ENCODE measurements at regions of chr10 and their contacts with region 1.

Region 1: DNA sequence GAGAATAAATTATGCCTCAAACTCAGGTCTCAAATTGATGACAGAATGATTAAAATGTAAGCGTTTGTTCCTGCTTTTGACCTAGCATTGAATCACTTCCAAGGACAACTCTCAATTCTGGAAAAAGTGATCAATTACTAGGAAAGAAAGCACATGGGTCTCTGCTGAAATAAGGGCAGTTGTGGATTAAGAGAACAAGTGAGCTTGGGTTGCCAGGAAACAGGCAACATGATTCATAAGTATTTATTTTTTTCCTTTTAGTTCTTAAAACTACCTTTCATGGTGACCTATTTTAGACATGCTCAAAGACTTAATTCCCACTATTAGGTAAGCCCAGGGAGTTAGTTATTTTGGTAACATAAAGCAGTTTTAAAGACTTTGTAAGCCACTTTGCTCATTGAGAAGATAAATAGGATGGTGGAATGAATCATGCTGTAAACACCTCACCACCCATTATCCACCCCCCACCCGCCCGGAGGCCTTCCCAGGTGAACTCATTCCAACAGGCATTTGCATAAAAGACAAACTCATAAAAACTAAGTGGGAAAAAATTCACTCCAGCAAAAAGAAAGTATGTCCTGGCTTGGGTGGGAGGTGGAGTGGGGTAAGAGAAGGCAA is 728.3 kb downstream of the SORCS1 start:
- DNase-seq: peak; percentile 74
- H3K4me3 Mint-ChIP-seq: no peak overlapping the region
- H3K27ac Mint-ChIP-seq: peak overlapping the region; percentile 25
- H3K4me1 Mint-ChIP-seq: peaks cover 17% of the 10 kb centered on the region
- H3K27me3 Mint-ChIP-seq: no peaks in the 10 kb centered on the region
- CTCF ChIP-seq: no peak

Region 2: GRCh38 chr10:106181501-106181900 is 254.7 kb before region 1 on chr10:
- CTCF ChIA-PET with region 1: no interaction called
- POLR2A ChIA-PET with region 1: no interaction called
- intact Hi-C with region 1: no loop called
- DNase-seq: no peak
- H3K4me3 Mint-ChIP-seq: no peak overlapping the region
- H3K27ac Mint-ChIP-seq: no peak overlapping the region
- H3K4me1 Mint-ChIP-seq: peaks cover 12% of the 10 kb centered on the region
- H3K27me3 Mint-ChIP-seq: no peaks in the 10 kb centered on the region
- CTCF ChIP-seq: no peak

Region 3: DNA sequence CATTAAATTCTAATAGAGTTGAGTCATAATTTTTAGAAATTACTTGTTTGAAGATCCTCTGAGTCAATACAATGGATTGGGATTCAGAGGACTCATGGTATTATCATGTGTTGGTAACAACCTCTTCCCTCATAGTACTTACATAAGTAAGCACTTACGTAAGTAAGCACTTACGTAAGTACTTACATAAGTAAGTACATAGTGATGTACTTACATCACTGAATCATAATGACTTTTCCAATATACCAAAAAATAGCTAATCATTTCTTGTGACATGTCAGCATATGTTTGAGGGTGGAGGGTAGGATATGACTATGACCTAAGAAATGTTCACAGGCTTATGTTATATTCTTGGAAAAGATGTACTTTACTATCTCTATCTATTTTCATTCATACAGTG is 12.2 kb before region 1 on chr10:
- CTCF ChIA-PET with region 1: interaction called, 5 read pairs
- POLR2A ChIA-PET with region 1: interaction called, 12 read pairs
- intact Hi-C with region 1: no loop called
- DNase-seq: peak; percentile 81
- H3K4me3 Mint-ChIP-seq: no peak overlapping the region
- H3K27ac Mint-ChIP-seq: peak overlapping the region; percentile 0
- H3K4me1 Mint-ChIP-seq: peaks cover 19% of the 10 kb centered on the region
- H3K27me3 Mint-ChIP-seq: no peaks in the 10 kb centered on the region
- CTCF ChIP-seq: no peak

Region 4: DNA sequence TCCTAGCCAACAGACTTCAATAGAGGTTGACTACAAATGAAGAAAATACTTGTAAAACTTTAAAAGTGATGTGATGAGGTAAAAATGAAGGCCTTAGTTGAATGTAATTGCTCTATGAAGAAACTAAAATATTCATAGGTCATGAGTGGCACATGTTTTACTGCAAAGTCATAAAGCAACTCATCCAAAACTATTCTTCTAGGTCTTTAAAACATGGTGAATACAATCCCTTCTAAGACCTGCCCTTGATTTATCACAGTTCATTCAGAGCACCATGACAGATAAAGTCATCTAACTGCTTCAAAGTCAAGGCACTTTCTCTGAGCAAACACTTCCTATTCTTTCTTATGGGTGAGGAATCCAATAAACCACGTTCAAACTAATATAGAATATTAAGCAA is 14.7 kb after region 1 on chr10:
- CTCF ChIA-PET with region 1: no interaction called
- POLR2A ChIA-PET with region 1: no interaction called
- intact Hi-C with region 1: no loop called
- DNase-seq: no peak
- H3K4me3 Mint-ChIP-seq: no peak overlapping the region
- H3K27ac Mint-ChIP-seq: no peak overlapping the region
- H3K4me1 Mint-ChIP-seq: no peaks in the 10 kb centered on the region
- H3K27me3 Mint-ChIP-seq: no peaks in the 10 kb centered on the region
- CTCF ChIP-seq: no peak

Measured in MCF 10A (cell line).